ENCODE measurements at regions of chr2 and their contacts with region 1.

Region 1: DNA sequence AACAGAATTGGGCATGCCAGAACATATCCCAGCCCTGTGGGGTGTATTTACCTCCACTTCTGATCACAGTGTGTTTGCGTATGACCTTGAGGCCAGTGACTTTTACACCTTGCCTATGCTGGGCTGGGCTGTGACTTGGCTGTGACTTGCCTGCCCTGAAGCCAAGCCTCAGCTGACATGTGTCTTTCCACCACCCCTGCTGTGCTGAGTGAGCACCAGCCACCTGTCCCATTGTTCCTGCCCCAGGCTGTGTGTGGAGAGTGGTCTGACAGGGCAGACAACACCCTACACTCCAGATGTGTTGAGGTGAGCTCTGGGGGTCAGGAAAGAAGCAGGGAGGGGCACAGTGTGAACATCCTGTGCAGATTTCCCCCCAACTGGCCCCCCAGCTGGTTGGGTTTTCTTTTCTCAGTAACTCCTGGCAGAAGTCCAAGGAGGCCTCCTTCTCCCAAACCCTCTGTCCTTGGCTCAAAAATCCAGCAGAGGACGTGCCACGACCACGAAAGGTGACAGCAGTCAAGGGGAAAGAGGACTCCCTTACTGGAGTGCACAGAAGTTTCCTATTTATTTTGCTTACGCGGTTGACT is 5.1 kb upstream of the STEAP3 start:
- DNase-seq: peak; percentile 59 to 84 (median 78)
- H3K4me3 ChIP-seq: no peak overlapping the region
- H3K27ac ChIP-seq: no peak overlapping the region
- H3K4me1 ChIP-seq: peaks cover 0 to 22% (median 12%) of the 10 kb centered on the region in 4 experiments
- H3K27me3 ChIP-seq: peaks cover 0 to 4% (median 0%) of the 10 kb centered on the region in 5 experiments

Region 2: GRCh38 chr2:119066272-119066804 is 152.2 kb before region 1 on chr2:
- CTCF ChIA-PET with region 1: no interaction called
- POLR2A ChIA-PET with region 1: no interaction called
- DNase-seq: no peak
- H3K4me3 ChIP-seq: no peak overlapping the region
- H3K27ac ChIP-seq: no peak overlapping the region
- H3K4me1 ChIP-seq: no peaks in the 10 kb centered on the region
- H3K27me3 ChIP-seq: peaks cover 0 to 11% (median 4%) of the 10 kb centered on the region in 5 experiments

Region 3: DNA sequence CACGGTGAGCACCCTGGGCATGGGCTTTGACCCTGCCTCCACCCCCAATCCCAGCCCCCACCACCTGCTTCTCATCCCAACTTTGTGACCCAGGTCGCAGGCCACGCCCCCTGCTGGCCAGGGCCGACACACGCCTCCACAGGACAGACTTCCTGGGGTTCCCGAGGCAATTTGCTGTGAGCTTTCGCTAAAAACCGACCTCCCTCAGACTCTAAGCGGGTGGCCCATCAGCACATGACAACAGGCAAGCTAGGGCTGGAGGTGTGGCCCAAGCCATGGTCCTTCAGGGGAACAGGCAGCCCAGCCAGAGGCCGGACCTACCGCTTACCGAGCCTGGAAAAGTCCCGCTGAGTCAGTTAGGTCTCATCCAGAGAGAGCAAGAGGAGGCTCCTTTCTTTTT is 91.9 kb before region 1 on chr2:
- CTCF ChIA-PET with region 1: no interaction called
- POLR2A ChIA-PET with region 1: no interaction called
- DNase-seq: peak; percentile 32 to 44 (median 33)
- H3K4me3 ChIP-seq: no peak overlapping the region
- H3K27ac ChIP-seq: no peak overlapping the region
- H3K4me1 ChIP-seq: no peaks in the 10 kb centered on the region
- H3K27me3 ChIP-seq: peaks cover 4 to 75% (median 15%) of the 10 kb centered on the region in 5 experiments

Region 4: DNA sequence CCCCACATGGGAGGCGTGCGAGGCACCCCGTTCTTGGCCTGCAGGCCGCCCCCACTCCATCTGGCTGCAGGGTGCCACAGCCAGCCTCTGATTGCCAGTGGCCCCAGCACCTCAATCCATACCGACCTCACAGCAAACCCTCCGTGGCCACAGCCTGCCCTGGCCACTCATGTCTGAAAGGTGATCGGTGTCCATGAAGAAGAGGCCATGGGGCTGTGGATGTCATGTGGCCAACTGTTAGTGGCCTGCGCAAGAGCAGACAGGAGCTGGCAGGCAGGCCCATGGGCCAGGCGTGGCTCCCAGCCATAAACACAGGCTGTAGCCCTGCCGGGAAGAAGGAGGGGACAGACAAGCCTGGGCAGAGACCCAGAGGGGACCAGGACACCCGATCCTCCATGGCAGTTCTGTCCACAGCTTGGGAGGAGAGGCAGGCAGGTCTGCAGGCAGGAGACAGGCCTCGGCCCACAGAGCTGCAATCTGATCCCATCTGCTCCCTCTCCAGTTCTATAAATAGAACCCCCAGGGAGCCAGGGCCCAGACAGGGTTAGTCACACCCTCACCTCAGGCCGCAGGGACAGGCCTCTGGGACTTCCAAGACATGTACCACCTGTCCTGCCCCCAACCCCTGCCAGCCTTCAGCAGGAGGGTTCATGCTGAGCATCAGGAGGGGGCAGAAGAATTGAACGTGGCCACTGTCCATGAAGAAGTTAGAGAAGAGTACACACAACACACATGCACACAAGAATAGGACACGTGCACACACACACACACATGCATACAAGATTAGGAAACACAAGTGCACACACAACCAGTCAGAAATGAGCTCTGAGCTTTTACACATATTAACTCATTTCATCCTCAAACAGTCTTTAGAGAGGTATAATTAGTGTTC is 22.0 kb after region 1 on chr2:
- CTCF ChIA-PET with region 1: interaction called, 10 read pairs
- POLR2A ChIA-PET with region 1: no interaction called
- DNase-seq: no peak
- H3K4me3 ChIP-seq: no peak overlapping the region
- H3K27ac ChIP-seq: no peak overlapping the region
- H3K4me1 ChIP-seq: peaks cover 0 to 6% (median 0%) of the 10 kb centered on the region in 4 experiments
- H3K27me3 ChIP-seq: no peaks in the 10 kb centered on the region

Region 5: DNA sequence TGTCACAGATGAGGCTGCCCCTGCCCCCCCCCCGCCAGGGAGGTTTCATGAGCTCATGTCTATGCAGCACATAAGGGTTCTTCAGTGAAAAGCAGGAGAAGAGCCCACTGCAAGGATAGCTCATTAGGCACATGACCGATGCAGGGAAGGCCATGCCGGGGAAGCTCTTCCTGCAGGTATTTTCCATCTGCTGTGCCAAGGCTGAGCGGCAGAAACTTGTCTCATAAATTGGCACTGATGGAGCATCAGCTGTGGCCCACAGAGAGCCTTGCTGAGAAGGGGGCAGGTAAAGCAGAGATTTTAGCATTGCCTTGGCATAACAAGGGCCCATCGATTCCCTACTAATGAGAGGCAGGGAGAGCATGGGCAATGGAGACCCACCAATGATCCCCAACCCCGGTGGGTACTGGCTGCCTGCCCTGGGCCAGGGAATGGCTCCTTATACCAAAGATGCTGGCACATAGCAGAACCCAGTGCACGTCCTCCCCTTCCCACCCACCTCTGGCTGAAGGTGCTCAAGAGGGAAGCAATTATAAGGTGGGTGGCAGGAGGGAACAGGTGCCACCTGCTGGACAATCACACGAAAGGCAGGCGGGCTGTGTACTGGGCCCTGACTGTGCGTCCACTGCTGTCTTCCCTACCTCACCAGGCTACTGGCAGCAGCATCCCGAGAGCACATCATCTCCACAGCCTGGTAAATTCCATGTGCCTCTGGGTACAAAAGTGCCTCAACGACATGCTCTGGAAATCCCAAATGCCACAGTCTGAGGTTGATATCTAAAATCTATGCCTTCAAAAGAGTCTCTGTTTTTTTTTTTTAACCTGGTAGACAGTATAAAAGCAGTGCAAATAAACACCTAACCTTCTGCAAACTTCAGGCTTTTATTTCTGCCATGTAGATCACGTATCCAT is 46.5 kb after region 1 on chr2:
- CTCF ChIA-PET with region 1: interaction called, 19 read pairs
- POLR2A ChIA-PET with region 1: no interaction called
- DNase-seq: peak; percentile 17 to 53 (median 49)
- H3K4me3 ChIP-seq: no peak overlapping the region
- H3K27ac ChIP-seq: no peak overlapping the region
- H3K4me1 ChIP-seq: peaks cover 0 to 25% (median 13%) of the 10 kb centered on the region in 4 experiments
- H3K27me3 ChIP-seq: no peaks in the 10 kb centered on the region